Breast epithelium (tissue), 4 donors: ENCODE measurements at regions of chr1 and their contacts with region 1.

Region 1: DNA sequence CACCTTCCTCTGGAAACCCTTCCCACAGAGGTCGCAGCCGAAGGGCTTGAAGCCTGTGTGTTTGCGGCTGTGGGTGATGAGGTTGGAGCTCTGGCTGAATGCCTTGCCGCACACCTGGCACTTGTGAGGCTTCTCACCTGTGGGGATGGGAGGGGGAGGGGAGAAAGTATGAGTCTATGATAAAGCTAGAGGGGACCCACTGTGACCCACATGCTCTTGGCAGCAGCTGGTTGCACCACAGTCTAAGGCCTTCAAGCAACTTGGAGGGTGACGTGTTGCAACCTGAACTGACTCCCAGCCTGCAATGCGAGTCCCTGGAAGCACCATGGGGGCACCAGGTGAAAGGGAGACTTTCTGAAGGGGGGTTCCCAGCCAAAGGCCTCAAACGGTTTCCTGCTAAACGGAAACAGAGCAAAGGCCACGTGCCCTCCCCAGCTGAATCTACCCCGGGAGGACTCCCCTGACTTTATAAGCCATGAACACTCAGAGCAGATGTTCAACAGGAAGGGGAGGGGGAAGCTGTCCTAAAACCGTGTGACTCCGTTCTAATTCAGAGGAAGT is 10.6 kb downstream of the GFI1 start:
- DNase-seq: no peak
- H3K4me3 ChIP-seq: no peak overlapping the region
- H3K27ac ChIP-seq: no peak overlapping the region
- H3K4me1 ChIP-seq: no peaks in the 10 kb centered on the region
- H3K27me3 ChIP-seq: peaks cover 0 to 17% of the 10 kb centered on the region in 2 donors
- CTCF ChIP-seq: no peak
- POLR2A ChIP-seq: no peak

Region 2: GRCh38 chr1:92411511-92411910 is 64.6 kb before region 1 on chr1:
- intact Hi-C with region 1: loop called (anchors 2 kb)
- DNase-seq: no peak
- H3K4me3 ChIP-seq: no peak overlapping the region
- H3K27ac ChIP-seq: no peak overlapping the region
- H3K4me1 ChIP-seq: no peaks in the 10 kb centered on the region
- H3K27me3 ChIP-seq: no peaks in the 10 kb centered on the region
- CTCF ChIP-seq: no peak
- POLR2A ChIP-seq: no peak